ENCODE measurements at regions of chr1 and their contacts with region 1.

Region 1: GRCh38 chr1:150970808-150971592 is 3.6 kb downstream of the CERS2 start:
- DNase-seq: no peak
- ATAC-seq: no peak
- H3K4me3 ChIP-seq: no peak overlapping the region
- H3K4me3 Mint-ChIP-seq: peak overlapping the region in 2 of 3 donors; percentile 4 to 89
- H3K27ac ChIP-seq: peak overlapping the region; percentile 12
- H3K27ac Mint-ChIP-seq: peak overlapping the region; percentile 91 to 94
- H3K4me1 ChIP-seq: peaks cover 23 to 47% of the 10 kb centered on the region in 2 experiments
- H3K4me1 Mint-ChIP-seq: peaks cover 40 to 47% (median 41%) of the 10 kb centered on the region in 3 donors
- H3K27me3 ChIP-seq: no peaks in the 10 kb centered on the region
- H3K27me3 Mint-ChIP-seq: no peaks in the 10 kb centered on the region

Region 2: DNA sequence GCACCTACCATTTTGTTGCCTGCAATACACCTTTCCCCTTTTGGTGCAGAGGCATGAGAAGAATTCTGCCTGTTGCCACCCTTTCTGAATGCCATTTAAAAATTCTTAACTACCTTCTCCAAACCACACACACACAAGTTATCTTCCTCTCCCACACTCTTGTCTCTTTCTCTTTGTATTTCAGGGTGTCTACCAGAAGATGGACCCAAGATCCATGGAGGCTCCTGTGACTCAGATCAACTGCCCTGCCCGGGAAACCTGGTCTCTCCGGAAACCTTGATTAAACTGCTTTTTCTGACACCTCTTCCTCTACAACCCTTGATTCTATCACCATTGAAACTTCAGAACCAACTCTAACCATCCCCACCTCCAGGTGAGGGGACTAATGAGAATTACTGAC is 486.1 kb before region 1 on chr1:
- CTCF ChIA-PET with region 1: interaction called in 1 of 2 experiments, 10 read pairs
- POLR2A ChIA-PET with region 1: no interaction called
- DNase-seq: no peak
- ATAC-seq: no peak
- H3K4me3 ChIP-seq: no peak overlapping the region
- H3K4me3 Mint-ChIP-seq: peak overlapping the region in 1 of 3 donors; percentile 53
- H3K27ac ChIP-seq: no peak overlapping the region
- H3K27ac Mint-ChIP-seq: no peak overlapping the region
- H3K4me1 ChIP-seq: peaks cover 0 to 9% of the 10 kb centered on the region in 2 experiments
- H3K4me1 Mint-ChIP-seq: peaks cover 18 to 26% (median 22%) of the 10 kb centered on the region in 3 donors
- H3K27me3 ChIP-seq: no peaks in the 10 kb centered on the region
- H3K27me3 Mint-ChIP-seq: no peaks in the 10 kb centered on the region

Region 3: DNA sequence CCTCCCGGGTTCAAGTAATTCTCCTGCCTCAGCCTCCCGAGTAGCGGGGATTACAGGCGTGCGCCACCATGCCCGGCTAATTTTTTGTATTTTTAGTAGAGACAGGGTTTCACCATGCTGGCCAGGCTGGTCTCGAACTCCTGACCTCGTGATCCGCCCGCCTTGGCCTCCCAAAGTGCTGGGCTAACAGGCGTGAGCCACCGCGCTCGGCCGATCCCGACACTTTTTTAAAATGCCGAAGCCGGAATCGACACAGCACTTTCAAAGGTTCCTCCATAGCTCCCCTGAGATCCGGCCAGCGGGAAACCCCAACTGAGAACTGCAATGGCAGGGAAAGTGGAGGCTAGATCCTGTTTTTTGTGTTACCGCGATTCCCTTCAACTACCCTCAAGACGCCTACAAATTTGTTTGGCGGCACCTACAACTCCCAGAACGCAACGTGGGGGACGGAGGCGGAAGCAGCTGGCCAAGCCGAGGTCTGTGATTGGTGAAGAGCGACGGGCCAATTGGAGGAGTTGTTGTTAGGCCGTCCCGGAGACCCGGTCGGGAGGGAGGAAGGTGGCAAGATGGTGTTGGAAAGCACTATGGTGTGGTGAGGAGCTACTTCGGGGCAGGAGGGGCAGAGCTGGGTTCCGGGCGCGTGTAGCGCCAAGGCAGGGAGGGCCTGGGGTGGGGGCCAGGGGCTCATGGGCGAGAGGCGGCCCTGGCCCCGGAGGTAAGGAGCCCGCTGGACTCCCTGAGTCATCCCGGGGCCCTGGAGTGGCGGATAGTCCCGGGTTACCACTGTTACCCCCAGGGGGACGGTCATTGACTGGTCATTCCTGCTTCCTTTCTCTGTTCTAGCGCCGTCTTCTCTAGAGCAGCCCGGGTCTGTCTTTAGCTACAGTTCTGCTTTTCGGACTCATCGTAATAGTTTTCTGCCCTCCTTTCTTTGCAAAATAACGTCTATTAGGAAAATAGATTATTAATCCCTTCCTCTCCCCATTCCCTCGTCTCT is 283.5 kb after region 1 on chr1 and contains the start of gene PSMD4:
- CTCF ChIA-PET with region 1: interaction called in 1 of 2 experiments, 3 read pairs
- POLR2A ChIA-PET with region 1: interaction called, 7 to 11 read pairs
- DNase-seq: peak; percentile 78 to 97 (median 93)
- ATAC-seq: peak; percentile 93 to 96 (median 94)
- H3K4me3 ChIP-seq: peak within 1 kb of the TSS; percentile 82 to 92
- H3K4me3 Mint-ChIP-seq: peak within 1 kb of the TSS; percentile 83 to 91 (median 88)
- H3K27ac ChIP-seq: peak within 1 kb of the TSS; percentile 69
- H3K27ac Mint-ChIP-seq: peak within 1 kb of the TSS; percentile 89
- H3K4me1 ChIP-seq: peaks cover 6 to 29% of the 10 kb centered on the region in 2 experiments
- H3K4me1 Mint-ChIP-seq: peaks cover 27 to 39% (median 36%) of the 10 kb centered on the region in 3 donors
- H3K27me3 ChIP-seq: no peaks in the 10 kb centered on the region
- H3K27me3 Mint-ChIP-seq: no peaks in the 10 kb centered on the region
- total RNA-seq, gene PSMD4: 68.1 to 150 (median 133) TPM

Region 4: DNA sequence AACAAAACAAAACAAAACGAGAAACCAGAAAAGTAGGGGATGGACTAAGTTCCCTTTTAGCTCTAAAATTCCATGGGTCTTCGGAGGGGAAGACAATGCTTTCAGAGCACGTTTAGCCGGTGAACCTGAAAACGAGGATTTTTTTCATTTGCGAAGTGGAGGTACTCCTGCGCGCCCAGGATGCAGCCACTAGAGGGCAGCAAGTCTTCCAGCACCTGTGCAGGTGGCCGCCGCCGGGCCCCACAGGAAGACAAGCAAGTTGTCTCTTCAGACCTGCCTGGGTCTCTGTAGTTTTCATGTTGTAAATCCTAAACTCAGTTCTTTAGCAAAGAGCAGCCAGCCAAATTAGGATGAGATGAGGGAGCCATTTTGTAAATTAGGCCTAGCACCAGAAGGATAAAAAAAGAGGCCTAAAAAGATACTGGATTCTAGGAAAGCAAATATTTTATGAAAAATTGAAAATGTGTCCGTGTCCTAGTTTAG is 623.2 kb after region 1 on chr1:
- CTCF ChIA-PET with region 1: no interaction called
- POLR2A ChIA-PET with region 1: no interaction called
- DNase-seq: peak; percentile 71 to 92 (median 84)
- ATAC-seq: peak; percentile 97 to 100 (median 99)
- H3K4me3 ChIP-seq: peak overlapping the region in 1 of 2 donors; percentile 19
- H3K4me3 Mint-ChIP-seq: peak overlapping the region; percentile 48 to 60 (median 53)
- H3K27ac ChIP-seq: no peak overlapping the region
- H3K27ac Mint-ChIP-seq: peak overlapping the region; percentile 53 to 75
- H3K4me1 ChIP-seq: peaks cover 0 to 6% of the 10 kb centered on the region in 2 experiments
- H3K4me1 Mint-ChIP-seq: peaks cover 8 to 12% (median 9%) of the 10 kb centered on the region in 3 donors
- H3K27me3 ChIP-seq: no peaks in the 10 kb centered on the region
- H3K27me3 Mint-ChIP-seq: peaks cover 4 to 6% of the 10 kb centered on the region in 2 donors

Measured in T-cell (primary cell).